Sciatic nerve (tissue), 2 donors: ENCODE measurements at regions of chr13 and their contacts with region 1.

Region 1: GRCh38 chr13:45310341-45311125 is 30.4 kb downstream of the TPT1 start:
- DNase-seq: no peak
- ATAC-seq: no peak

Region 2: DNA sequence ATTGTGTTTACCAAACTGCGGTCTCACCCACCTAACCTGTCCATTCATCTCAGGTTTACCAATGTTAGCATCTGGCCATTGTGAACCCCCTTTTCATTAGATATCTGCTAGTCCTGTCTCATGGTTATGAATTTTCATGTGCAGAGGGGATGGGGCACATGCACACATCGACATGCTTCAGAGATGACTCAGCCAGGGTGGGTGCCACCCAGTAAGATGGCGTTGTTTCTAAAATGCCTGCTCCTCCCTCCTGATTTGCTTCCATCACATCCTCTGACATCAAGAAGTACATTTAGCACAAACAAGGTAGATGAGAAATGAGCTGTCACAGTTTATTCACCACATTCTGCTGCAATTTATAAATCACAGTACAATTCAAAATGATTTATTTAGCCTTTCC is 269.9 kb before region 1 on chr13:
- intact Hi-C with region 1: loop called (anchors 5 kb)
- DNase-seq: no peak
- ATAC-seq: no peak